ENCODE measurements at regions of chr3 and their contacts with region 1.

Region 1: GRCh38 chr3:5122030-5122740 is at the start of gene ARL8B:
- DNase-seq: no peak
- H3K4me3 ChIP-seq: peak within 1 kb of the TSS; percentile 81 to 98
- H3K27ac ChIP-seq: peak within 1 kb of the TSS; percentile 98
- H3K4me1 ChIP-seq: peaks cover 44% of the 10 kb centered on the region
- H3K27me3 ChIP-seq: no peaks in the 10 kb centered on the region
- CTCF ChIP-seq: peak; percentile 93 to 99 (median 96)
- POLR2A ChIP-seq: peak in 1 of 2 donors; percentile 44
- total RNA-seq, gene ARL8B: 44.4 TPM

Region 2: GRCh38 chr3:5187156-5187919 is 65.2 kb after region 1 on chr3 and contains the start of gene EDEM1:
- intact Hi-C with region 1: loop called (anchors 10 kb)
- DNase-seq: peak in 1 of 2 donors; percentile 95
- H3K4me3 ChIP-seq: peak within 1 kb of the TSS; percentile 77 to 98
- H3K27ac ChIP-seq: peak within 1 kb of the TSS; percentile 96
- H3K4me1 ChIP-seq: peaks cover 46% of the 10 kb centered on the region
- H3K27me3 ChIP-seq: no peaks in the 10 kb centered on the region
- CTCF ChIP-seq: peak in 1 of 3 experiments; percentile 14
- POLR2A ChIP-seq: peak in 1 of 2 donors; percentile 85
- total RNA-seq, gene EDEM1: 30.9 TPM

Measured in vagina (tissue), 2 donors.